ENCODE measurements at regions of chr11 and their contacts with region 1.

Region 1: DNA sequence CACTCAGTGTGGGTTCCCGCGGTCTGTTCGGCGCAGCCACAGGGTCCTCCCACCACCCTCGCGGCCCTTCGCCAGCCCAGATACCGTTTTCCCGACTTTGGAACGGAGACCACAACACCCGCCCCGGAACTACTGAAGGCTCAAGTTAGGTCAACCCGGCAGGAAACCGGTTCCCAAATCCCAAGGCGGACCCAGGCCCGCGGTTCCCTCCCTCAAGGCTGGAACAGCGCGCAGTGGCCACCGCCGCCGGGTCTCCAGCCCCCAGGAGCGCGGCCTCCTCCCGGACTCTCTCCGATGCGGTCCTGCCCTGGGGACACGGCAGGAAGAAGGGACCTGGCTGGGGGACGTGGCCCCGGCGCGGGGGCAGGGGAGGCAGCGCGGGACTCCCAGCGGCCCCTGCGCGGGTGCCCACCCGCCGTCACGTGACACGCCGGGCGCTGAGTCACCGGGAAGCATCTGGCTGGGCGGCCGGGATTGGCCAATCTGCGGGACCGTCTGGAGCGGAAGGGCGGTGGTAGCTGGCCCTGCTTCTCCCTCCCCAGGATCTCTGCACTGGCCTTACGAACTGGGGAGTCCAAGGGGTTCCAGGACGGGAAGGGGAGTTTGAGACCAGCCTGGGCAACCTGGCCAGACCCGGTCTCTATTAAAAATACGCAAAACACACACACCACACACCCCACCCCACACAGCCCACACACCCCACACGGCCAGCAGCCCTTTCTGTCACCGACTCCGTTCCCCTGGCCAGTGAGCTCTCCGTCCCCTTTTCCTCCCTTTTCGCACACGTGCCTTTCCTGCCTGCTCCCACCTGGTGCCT is 21.5 kb upstream of the MALAT1 start:
- DNase-seq: peak; percentile 97
- H3K4me3 Mint-ChIP-seq: peak overlapping the region; percentile 97
- H3K27ac Mint-ChIP-seq: peak overlapping the region; percentile 100
- H3K4me1 Mint-ChIP-seq: peaks cover 22% of the 10 kb centered on the region
- H3K27me3 Mint-ChIP-seq: no peaks in the 10 kb centered on the region

Region 2: GRCh38 chr11:65418711-65419459 is 58.5 kb before region 1 on chr11:
- intact Hi-C with region 1: loop called (anchors 2 kb)
- DNase-seq: peak; percentile 96
- H3K4me3 Mint-ChIP-seq: peak overlapping the region; percentile 100
- H3K27ac Mint-ChIP-seq: peak overlapping the region; percentile 100
- H3K4me1 Mint-ChIP-seq: peaks cover 55% of the 10 kb centered on the region
- H3K27me3 Mint-ChIP-seq: peaks cover 5% of the 10 kb centered on the region

Region 3: GRCh38 chr11:65425105-65425970 is 52.0 kb before region 1 on chr11:
- intact Hi-C with region 1: loop called (anchors 2 kb)
- DNase-seq: peak; percentile 93
- H3K4me3 Mint-ChIP-seq: peak overlapping the region; percentile 100
- H3K27ac Mint-ChIP-seq: peak overlapping the region; percentile 100
- H3K4me1 Mint-ChIP-seq: peaks cover 67% of the 10 kb centered on the region
- H3K27me3 Mint-ChIP-seq: peaks cover 7% of the 10 kb centered on the region

Region 4: DNA sequence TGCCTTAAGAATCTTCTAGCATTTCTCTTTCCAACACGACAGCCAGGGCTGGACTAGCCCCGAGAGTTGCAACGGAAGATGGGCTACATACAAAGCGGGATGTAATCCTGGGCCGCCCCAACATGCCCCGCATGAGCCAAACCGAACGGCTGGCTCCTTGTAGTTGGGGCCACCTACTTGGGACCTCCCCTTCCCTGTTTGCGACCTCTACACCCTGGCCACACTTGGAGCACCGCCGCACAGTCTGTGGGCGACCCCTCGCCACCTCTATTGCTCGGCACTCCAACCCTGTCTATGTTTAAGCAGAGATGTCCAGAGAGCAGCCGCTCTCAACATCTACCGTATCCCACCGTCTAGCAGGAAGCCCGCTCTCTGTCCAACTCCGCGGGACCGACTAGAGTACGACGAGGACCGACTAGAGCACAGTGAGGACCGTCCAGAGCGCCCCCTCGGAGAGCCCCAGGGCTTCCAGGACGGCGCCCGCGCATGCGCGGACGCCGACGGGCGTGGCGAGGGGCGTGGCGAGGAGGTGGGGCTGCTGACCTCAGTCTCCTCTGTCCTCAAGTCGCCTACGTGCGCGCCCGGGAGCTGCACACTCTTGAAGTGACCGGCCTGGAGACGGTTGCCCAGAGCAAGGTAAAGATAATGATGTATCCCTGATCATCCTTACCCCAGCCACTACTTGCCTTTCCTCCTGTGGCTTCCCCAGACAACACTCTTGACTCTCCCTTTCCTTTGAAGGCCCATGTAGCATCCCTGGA is 22.5 kb before region 1 on chr11:
- intact Hi-C with region 1: loop called (anchors 2 kb)
- DNase-seq: peak; percentile 95
- H3K4me3 Mint-ChIP-seq: peak overlapping the region; percentile 94
- H3K27ac Mint-ChIP-seq: peak overlapping the region; percentile 83
- H3K4me1 Mint-ChIP-seq: peaks cover 25% of the 10 kb centered on the region
- H3K27me3 Mint-ChIP-seq: no peaks in the 10 kb centered on the region

Region 5: DNA sequence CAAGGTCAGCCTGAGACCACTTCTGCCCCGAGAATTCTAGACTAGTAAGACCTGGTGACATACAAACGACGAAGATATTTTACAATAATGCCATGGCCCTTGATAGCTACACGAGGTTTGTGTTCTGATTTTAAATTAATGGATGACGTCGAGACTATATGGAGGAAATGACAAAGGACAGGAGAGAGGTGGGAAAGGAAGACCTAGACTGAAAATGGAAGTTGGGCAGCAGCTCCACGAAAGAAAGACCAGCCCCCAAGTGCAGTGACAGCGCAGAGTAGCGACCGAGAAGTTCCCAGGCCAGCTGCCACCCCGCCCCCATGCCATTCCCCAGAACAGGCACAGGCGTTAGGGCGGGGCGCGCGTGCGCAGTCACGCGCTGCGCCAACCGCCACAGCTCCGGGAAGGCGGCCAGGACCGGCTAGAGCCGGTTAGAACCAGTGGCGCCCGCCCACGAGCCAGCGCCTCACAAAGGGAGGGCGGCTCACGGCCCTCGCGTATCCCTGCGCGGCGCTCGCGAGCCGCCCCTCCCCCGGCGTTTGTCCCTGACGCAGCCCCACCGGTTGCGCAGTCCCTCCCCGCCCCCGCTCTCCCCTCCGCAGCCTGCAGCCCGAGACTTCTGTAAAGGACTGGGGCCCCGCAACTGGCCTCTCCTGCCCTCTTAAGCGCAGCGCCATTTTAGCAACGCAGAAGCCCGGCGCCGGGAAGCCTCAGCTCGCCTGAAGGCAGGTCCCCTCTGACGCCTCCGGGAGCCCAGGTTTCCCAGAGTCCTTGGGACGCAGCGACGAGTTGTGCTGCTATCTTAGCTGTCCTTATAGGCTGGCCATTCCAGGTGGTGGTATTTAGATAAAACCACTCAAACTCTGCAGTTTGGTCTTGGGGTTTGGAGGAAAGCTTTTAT is 20.0 kb after region 1 on chr11:
- intact Hi-C with region 1: loop called (anchors 1 kb)
- DNase-seq: peak; percentile 99
- H3K4me3 Mint-ChIP-seq: no peak overlapping the region
- H3K27ac Mint-ChIP-seq: no peak overlapping the region
- H3K4me1 Mint-ChIP-seq: peaks cover 44% of the 10 kb centered on the region
- H3K27me3 Mint-ChIP-seq: no peaks in the 10 kb centered on the region

Region 6: DNA sequence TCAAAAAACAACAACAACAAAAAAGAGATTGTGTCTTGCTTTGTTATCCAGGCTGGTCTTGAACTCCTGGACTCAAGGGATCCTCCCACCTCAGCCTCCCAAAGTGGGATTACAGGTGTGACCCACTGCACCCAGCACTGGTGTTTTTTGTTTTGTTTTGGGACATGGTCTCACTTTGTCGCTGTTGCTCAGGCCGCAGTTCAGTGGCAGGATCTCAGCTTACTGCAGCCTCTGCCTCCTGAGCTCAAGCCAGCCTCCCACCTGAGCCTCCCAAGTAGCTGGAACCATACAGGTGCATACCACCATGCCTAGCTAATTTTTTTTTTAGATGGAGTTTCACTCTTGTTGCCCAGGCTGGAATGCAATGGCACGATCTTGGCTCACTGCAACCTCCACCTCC is 34.9 kb after region 1 on chr11:
- intact Hi-C with region 1: no loop called
- DNase-seq: no peak
- H3K4me3 Mint-ChIP-seq: no peak overlapping the region
- H3K27ac Mint-ChIP-seq: no peak overlapping the region
- H3K4me1 Mint-ChIP-seq: peaks cover 27% of the 10 kb centered on the region
- H3K27me3 Mint-ChIP-seq: no peaks in the 10 kb centered on the region

Region 7: DNA sequence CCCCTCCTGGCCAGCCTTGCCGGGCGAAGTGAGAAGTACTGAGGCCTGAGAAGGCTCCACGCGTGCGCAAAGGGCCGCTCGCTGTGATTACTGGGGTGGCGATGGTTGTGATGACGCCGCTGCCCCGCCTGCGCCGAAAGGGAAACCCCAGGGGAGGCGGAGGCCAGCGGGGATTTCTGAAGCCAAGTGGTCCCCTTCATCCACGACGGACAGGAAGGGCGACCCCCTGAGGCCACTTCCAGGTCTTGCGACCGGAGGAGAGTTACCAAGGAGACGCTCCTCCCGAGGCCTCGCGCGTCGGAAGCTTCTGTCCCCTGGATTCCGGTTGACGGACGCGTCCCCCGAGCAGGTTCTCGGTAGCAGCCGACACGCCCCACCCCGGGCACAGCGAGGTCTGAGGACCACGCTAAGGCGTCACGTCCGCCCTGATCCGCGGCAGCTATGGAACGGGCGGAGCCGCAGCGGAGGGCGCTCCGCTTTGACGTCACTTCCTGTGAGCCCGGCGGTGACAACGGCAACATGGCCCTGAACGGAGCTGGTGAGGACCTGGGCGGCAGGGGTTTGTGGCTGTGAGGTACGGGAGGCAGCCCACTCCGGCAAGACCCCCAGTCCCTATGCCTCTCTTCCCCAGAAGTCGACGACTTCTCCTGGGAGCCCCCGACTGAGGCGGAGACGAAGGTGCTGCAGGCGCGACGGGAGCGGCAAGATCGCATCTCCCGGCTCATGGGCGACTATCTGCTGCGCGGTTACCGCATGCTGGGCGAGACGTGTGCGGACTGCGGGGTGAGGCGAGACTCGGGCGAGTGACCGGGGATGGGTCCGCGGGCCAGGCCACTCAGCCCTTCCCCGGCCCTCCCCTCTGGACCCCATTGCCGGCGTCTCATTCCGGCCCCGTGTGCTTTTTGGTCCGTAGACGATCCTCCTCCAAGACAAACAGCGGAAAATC is 92.9 kb after region 1 on chr11 and contains the start of gene ZNRD2:
- intact Hi-C with region 1: no loop called
- DNase-seq: peak; percentile 100
- H3K4me3 Mint-ChIP-seq: peak within 1 kb of the TSS; percentile 97
- H3K27ac Mint-ChIP-seq: peak within 1 kb of the TSS; percentile 99
- H3K4me1 Mint-ChIP-seq: peaks cover 57% of the 10 kb centered on the region
- H3K27me3 Mint-ChIP-seq: no peaks in the 10 kb centered on the region
- total RNA-seq, gene ZNRD2: 83.3 and 83.4 TPM in 2 replicates

Measured in activated CD4-positive, alpha-beta T cell treated with anti-CD3 and anti-CD28 coated beads, Interleukin-2, amount 10 ng/mL, durations not matched to agents 24 days and 14 days (primary cell).